Endothelial cell of umbilical vein (primary cell): ENCODE measurements at regions of chr12 and their contacts with region 1.

Region 1: GRCh38 chr12:49121047-49121696 is 10.0 kb downstream of the TUBA1B start:
- DNase-seq: peak; percentile 65
- H3K4me3 ChIP-seq: no peak overlapping the region
- H3K27ac ChIP-seq: no peak overlapping the region
- H3K4me1 ChIP-seq: no peaks in the 10 kb centered on the region
- H3K27me3 ChIP-seq: no peaks in the 10 kb centered on the region
- CTCF ChIP-seq: peak; percentile 64 to 67
- POLR2A ChIP-seq: no peak

Region 2: GRCh38 chr12:48995061-48995879 is 125.9 kb before region 1 on chr12:
- CTCF ChIA-PET with region 1: interaction called, 38 read pairs
- POLR2A ChIA-PET with region 1: no interaction called
- dilution Hi-C with region 1: no loop called
- intact Hi-C with region 1: loop called (anchors 1 kb)
- DNase-seq: peak; percentile 77
- H3K4me3 ChIP-seq: no peak overlapping the region
- H3K27ac ChIP-seq: no peak overlapping the region
- H3K4me1 ChIP-seq: peaks cover 11% of the 10 kb centered on the region
- H3K27me3 ChIP-seq: peaks cover 25 to 26% of the 10 kb centered on the region in 2 experiments
- CTCF ChIP-seq: peak; percentile 69 to 85
- POLR2A ChIP-seq: no peak

Region 3: GRCh38 chr12:49069507-49070346 is 51.4 kb before region 1 on chr12 and contains the start of gene RHEBL1:
- CTCF ChIA-PET with region 1: interaction called, 197 read pairs
- POLR2A ChIA-PET with region 1: no interaction called
- dilution Hi-C with region 1: no loop called
- intact Hi-C with region 1: loop called (anchors 1 kb)
- DNase-seq: peak; percentile 98
- H3K4me3 ChIP-seq: peak within 1 kb of the TSS; percentile 61 to 81 (median 64)
- H3K27ac ChIP-seq: peak within 1 kb of the TSS; percentile 30
- H3K4me1 ChIP-seq: peaks cover 12% of the 10 kb centered on the region
- H3K27me3 ChIP-seq: no peaks in the 10 kb centered on the region
- CTCF ChIP-seq: peak in 1 of 2 donors; percentile 13
- POLR2A ChIP-seq: peak; percentile 70
- total RNA-seq, gene RHEBL1: 2.3 and 2.6 TPM in 2 replicates

Region 4: GRCh38 chr12:49098035-49098451 is 23.1 kb before region 1 on chr12:
- CTCF ChIA-PET with region 1: interaction called, 124 read pairs
- POLR2A ChIA-PET with region 1: no interaction called
- dilution Hi-C with region 1: no loop called
- intact Hi-C with region 1: no loop called
- DNase-seq: peak; percentile 58
- H3K4me3 ChIP-seq: no peak overlapping the region
- H3K27ac ChIP-seq: no peak overlapping the region
- H3K4me1 ChIP-seq: peaks cover 19% of the 10 kb centered on the region
- H3K27me3 ChIP-seq: no peaks in the 10 kb centered on the region
- CTCF ChIP-seq: peak; percentile 81 to 91
- POLR2A ChIP-seq: no peak

Region 5: DNA sequence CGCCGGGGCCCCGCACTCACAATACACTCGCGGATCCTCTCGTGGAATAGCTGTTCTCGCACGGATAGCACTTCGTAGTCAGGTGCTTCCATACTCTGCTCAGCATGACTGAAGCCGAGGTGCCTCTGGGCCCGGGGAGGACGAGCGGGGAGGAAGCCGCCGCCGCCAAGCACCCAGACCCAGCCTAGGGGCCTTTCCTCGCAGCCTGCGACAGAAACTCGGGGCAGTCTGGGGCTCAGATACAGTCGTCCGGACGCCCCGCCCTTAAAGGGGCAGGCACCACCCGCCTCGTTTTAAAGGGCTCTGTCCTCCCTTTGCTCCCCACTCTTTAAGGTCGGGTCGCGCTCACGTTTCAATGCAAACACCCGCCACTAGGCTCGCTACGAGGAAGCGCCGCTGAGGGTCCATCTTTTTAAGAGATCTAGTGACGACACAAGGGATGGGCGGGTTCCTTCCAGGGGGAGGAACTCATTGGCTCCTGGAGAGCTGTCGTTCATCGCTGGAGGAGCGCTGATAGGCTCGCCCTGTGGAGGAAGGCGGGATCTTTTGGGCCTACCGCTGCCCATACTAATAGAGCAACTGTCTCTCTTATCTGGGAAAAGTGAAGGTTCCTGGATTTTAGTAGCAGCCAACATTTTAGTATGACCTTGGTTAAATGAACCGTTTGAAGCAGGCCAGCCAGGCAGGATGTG is 10.6 kb before region 1 on chr12 and contains the start of gene LMBR1L:
- CTCF ChIA-PET with region 1: interaction called, 56 read pairs
- POLR2A ChIA-PET with region 1: interaction called, 4 read pairs
- dilution Hi-C with region 1: no loop called
- intact Hi-C with region 1: no loop called
- DNase-seq: peak; percentile 98
- H3K4me3 ChIP-seq: peak within 1 kb of the TSS; percentile 36 to 92 (median 68)
- H3K27ac ChIP-seq: peak within 1 kb of the TSS; percentile 36
- H3K4me1 ChIP-seq: peaks cover 20% of the 10 kb centered on the region
- H3K27me3 ChIP-seq: no peaks in the 10 kb centered on the region
- CTCF ChIP-seq: peak in 1 of 2 donors; percentile 43
- POLR2A ChIP-seq: peak; percentile 74
- total RNA-seq, gene LMBR1L: 92.8 and 106 TPM in 2 replicates